Activated CD4-positive, alpha-beta T cell treated with anti-CD3 and anti-CD28 coated beads, Interleukin-2, amount 10 ng/mL, durations not matched to agents 24 days and 14 days (primary cell): ENCODE measurements at regions of chr3 and their contacts with region 1.

Region 1: DNA sequence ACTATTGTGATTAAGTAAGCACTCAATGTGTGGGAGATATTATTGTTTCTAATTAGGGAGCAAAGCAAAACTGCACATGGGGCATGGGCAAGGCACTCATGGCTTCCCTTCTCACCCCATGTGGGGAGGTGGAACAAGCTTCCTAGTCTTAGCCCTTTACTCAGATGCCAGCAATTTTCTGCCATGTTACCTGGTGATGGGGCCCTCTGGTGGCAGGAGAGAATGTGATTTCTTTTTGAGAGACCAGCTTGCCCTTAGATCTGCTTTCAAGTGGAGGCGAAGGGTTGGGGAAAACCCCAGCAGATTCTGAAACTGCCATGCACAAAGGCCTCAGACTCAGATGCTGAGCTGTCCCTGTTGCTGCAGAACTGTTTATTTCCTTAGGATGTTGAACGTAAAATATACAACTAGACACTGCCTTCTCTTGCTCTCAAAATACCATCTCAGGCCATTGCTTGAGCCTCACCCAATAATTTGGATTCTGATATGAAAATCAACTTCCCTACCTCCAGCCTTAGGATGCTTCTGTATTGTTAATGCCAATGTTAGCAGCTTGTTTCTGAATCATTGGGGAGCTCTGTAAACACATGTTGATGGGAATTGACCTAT is 130.2 kb upstream of the TPRG1 start:
- DNase-seq: peak; percentile 94
- H3K4me3 Mint-ChIP-seq: peak overlapping the region; percentile 48
- H3K27ac Mint-ChIP-seq: peak overlapping the region; percentile 79
- H3K4me1 Mint-ChIP-seq: peaks cover 54% of the 10 kb centered on the region
- H3K27me3 Mint-ChIP-seq: no peaks in the 10 kb centered on the region

Region 2: GRCh38 chr3:187684880-187685279 is 1356.7 kb before region 1 on chr3:
- intact Hi-C with region 1: no loop called
- DNase-seq: no peak
- H3K4me3 Mint-ChIP-seq: no peak overlapping the region
- H3K27ac Mint-ChIP-seq: no peak overlapping the region
- H3K4me1 Mint-ChIP-seq: peaks cover 6% of the 10 kb centered on the region
- H3K27me3 Mint-ChIP-seq: peaks cover 48% of the 10 kb centered on the region

Region 3: DNA sequence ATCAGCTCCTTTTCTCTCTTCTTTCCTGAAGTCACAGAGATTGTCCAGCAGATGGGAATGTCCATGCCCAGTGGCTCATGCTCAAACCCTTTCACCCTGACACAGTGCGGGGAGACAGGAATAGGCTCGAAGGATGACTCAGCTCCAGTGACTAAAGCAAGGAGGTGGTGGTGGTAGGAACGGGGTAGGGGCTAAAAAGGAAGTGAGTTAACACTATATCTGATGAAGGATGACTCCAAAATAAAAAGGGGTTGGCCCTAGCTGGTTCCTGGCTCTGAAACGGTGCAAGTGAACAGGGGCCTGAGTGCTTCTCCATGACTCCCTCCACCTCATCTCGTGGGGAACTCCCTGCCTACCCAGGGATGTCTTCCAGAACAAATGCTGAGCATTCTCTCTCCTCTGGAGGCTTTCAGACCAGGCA is 1055.1 kb before region 1 on chr3:
- intact Hi-C with region 1: loop called (anchors 10 kb)
- DNase-seq: peak; percentile 77
- H3K4me3 Mint-ChIP-seq: peak overlapping the region; percentile 56
- H3K27ac Mint-ChIP-seq: peak overlapping the region; percentile 84
- H3K4me1 Mint-ChIP-seq: peaks cover 57% of the 10 kb centered on the region
- H3K27me3 Mint-ChIP-seq: no peaks in the 10 kb centered on the region

Region 4: DNA sequence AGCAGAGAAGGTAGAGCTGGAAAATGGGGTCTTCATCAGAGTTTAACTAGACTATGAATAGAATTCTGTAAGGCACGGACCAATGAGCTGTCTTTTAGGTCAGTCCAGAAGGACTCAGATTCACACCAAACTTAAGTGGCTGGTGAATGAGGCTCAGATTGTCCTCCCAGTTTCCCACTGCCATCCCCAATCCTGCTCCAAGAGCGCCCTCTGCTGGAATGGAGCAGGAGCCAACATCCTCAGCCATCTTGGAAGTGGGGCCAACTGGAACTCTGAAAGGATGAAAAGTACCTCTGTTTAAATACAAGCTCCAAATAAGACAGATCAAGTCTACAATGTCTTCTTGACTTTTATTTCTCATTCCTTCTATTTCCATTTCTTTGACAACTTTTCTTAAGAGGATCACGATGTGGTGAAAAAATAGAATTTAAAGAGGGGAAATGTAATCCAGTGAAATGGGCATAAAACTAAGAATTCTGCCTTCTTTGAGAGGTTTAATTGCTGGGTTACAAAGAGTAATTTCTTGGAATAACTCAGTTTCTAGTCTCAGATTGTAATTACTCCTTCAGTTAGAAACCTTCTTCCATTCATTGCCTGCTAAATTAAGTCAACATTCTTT is 86.9 kb before region 1 on chr3:
- intact Hi-C with region 1: loop called (anchors 2 kb)
- DNase-seq: peak; percentile 94
- H3K4me3 Mint-ChIP-seq: no peak overlapping the region
- H3K27ac Mint-ChIP-seq: peak overlapping the region; percentile 10
- H3K4me1 Mint-ChIP-seq: peaks cover 27% of the 10 kb centered on the region
- H3K27me3 Mint-ChIP-seq: peaks cover 6% of the 10 kb centered on the region

Region 5: DNA sequence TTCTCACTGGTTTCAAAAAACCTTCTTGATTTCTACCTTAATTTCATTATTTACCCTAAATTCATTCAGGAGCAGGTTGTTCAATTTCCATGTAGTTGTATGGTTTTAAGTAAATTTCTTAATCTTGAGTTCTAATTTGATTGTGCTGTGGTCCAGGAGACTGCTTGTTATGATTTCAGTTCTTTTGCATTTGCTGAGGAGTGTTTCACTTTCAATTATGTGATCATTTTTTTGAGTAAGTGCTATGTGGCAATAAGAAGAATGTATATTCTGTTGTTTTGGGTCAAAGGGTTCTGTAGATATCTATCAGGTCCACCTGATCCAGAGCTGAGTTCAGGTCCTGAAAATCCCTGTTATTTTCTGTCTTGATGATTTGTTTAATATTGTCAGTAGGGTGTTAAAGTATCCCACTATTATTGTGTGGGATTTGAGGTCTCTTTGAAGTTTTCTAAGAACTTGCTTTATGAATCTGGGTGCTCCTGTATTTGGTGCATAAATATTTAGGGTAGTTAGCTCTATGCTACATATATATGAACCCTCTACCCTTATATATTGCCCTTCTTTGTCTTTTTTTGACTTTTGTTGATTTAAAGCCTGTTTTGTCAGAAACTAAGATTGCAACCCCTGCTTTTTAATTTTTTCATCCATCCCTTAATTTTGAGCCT is 28.2 kb before region 1 on chr3:
- intact Hi-C with region 1: loop called (anchors 1 kb)
- DNase-seq: no peak
- H3K4me3 Mint-ChIP-seq: no peak overlapping the region
- H3K27ac Mint-ChIP-seq: peak overlapping the region; percentile 25
- H3K4me1 Mint-ChIP-seq: peaks cover 21% of the 10 kb centered on the region
- H3K27me3 Mint-ChIP-seq: peaks cover 15% of the 10 kb centered on the region

Region 6: GRCh38 chr3:189132231-189132707 is 90.7 kb after region 1 on chr3:
- intact Hi-C with region 1: loop called (anchors 1 kb)
- DNase-seq: peak; percentile 93
- H3K4me3 Mint-ChIP-seq: peak overlapping the region; percentile 70
- H3K27ac Mint-ChIP-seq: peak overlapping the region; percentile 91
- H3K4me1 Mint-ChIP-seq: peaks cover 25% of the 10 kb centered on the region
- H3K27me3 Mint-ChIP-seq: no peaks in the 10 kb centered on the region

Region 7: GRCh38 chr3:189148081-189148507 is 106.5 kb after region 1 on chr3:
- intact Hi-C with region 1: loop called (anchors 5 kb)
- DNase-seq: peak; percentile 89
- H3K4me3 Mint-ChIP-seq: no peak overlapping the region
- H3K27ac Mint-ChIP-seq: no peak overlapping the region
- H3K4me1 Mint-ChIP-seq: peaks cover 28% of the 10 kb centered on the region
- H3K27me3 Mint-ChIP-seq: peaks cover 10% of the 10 kb centered on the region